ENCODE measurements at regions of chr1 and their contacts with region 1.

Region 1: DNA sequence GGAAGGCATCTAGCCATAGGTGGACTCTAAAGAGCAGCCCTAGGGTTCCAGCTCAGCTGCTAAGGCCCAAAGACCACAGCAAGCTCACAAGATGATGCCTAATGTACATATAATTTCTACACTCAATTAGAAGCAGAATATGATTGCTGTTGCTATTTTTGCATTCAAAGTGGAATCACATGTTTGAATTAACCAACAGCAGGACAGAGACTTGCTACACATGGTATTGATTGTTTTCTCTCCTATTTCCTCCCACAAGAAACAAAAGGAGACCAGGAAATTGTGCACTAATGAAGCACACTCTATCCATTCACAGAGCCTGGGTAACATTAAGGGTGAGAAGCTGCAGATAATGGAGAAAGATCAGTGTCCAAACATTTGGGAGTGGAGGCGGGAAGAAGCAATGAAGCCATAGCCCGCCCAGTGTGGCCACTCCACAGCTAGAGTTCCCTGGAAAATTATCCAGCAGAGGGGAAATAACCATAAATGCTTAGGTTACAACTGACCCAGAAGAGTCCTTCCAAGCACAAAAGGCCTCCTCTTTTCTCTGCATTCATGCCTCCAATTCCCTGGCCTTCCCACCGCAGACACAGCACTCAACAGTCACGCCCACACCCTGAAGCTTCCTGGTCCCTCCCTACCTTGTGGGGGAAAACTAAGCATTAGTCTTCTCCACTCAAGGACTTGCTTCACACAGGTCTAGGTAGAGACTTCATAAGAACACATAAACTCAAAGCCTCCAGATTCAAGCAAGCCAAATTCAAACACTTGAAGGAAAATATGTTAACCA is 7.5 kb downstream of the CNN3 start:
- DNase-seq: no peak
- ATAC-seq: peak in 2 of 8 donors; percentile 14 to 44
- H3K4me3 ChIP-seq: no peak overlapping the region
- H3K27ac ChIP-seq: peak overlapping the region in 2 of 10 donors; percentile 18
- H3K4me1 ChIP-seq: peaks cover 15 to 100% (median 67%) of the 10 kb centered on the region in 9 donors
- H3K27me3 ChIP-seq: peaks cover 0 to 7% (median 0%) of the 10 kb centered on the region in 7 donors
- CTCF ChIP-seq: no peak

Region 2: DNA sequence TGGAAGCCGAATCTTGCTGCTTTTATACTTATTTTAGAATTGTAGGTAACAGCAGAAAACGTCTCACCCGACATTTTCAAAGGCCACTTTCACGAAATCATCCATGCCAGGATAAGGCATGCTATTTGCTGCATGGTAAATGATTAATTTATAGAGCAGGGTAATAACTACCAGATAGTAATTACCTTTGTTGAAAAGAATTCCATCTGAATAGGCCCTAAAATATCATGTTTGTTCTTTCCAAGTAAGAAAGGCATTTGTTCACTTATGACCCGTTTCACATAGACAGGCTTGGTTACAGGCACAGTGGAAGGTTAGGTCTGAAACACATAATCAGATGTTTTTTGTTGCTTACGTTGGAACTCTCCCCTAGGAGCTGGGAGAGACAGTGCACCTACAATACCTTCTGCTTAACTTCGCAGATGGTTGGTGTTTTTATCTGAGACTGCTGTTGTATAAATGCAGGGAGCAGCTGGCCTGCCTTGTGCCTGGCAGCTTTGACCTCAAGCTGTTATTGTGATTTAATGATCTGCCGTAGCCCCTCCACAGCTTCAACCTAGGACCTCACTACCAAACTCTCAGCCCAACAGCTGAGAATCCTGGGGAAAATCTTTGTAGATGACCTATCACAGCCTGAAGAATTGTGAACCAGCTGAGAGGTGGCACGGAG is 97.7 kb before region 1 on chr1:
- intact Hi-C with region 1: no loop called
- DNase-seq: no peak
- ATAC-seq: no peak
- H3K4me3 ChIP-seq: no peak overlapping the region
- H3K27ac ChIP-seq: no peak overlapping the region
- H3K4me1 ChIP-seq: peaks cover 0 to 19% (median 11%) of the 10 kb centered on the region in 9 donors
- H3K27me3 ChIP-seq: peaks cover 0 to 61% (median 3%) of the 10 kb centered on the region in 7 donors
- CTCF ChIP-seq: no peak

Region 3: GRCh38 chr1:94863919-94864318 is 55.5 kb before region 1 on chr1:
- intact Hi-C with region 1: loop called in 5 of 10 experiments (anchors 2 to 10 kb)
- DNase-seq: peak in 1 of 2 donors; percentile 39
- ATAC-seq: peak; percentile 53 to 92 (median 70)
- H3K4me3 ChIP-seq: peak overlapping the region in 1 of 10 donors; percentile 1
- H3K27ac ChIP-seq: peak overlapping the region; percentile 67 to 88 (median 80)
- H3K4me1 ChIP-seq: peaks cover 6 to 74% (median 39%) of the 10 kb centered on the region in 9 donors
- H3K27me3 ChIP-seq: no peaks in the 10 kb centered on the region
- CTCF ChIP-seq: no peak

Region 4: DNA sequence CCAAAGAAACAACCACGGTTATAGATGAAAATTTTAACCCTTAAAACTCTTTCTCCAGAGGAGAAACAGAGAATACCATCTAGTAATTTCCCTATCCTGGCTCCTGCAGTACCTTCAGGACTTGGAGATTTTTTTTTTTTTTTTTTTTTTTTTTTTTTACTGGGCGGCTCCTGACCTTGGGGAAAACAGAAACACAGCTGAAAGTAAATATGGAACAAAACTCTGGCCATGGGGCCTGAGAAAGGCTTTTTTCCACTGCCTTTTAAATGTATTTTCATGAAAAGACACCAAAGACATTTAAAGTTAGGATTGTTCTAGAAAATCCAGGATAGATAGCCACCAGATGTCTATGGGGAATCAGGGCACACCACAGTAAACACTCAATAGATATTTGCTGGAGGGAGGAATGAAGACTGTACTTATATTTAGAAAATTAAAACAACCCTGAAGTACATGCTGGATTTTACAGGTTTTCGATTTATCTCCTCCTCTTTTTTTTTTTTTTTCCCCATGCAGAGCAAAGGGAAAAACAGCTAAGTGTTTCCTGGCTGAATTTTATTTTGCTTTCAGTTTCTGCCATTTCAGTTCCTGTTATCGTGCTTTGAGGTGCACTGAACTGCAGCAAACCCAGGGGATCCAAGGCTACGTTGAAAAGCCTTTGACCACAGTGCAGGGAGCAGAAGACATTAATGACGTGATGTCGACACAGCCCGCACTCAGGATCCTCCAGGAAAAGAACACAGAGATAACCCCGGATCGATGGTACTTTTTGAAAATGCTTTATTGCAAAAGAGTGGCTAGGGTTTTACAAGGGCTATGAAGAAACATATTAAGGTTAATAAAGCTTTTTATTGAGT is 43.2 kb after region 1 on chr1:
- intact Hi-C with region 1: no loop called
- DNase-seq: peak in 1 of 2 donors; percentile 29
- ATAC-seq: peak; percentile 56 to 78 (median 73)
- H3K4me3 ChIP-seq: peak overlapping the region; percentile 7 to 55 (median 47)
- H3K27ac ChIP-seq: peak overlapping the region; percentile 46 to 88 (median 73)
- H3K4me1 ChIP-seq: peaks cover 2 to 25% (median 13%) of the 10 kb centered on the region in 9 donors
- H3K27me3 ChIP-seq: no peaks in the 10 kb centered on the region
- CTCF ChIP-seq: no peak